ENCODE measurements at regions of chr20 and their contacts with region 1.

Region 1: DNA sequence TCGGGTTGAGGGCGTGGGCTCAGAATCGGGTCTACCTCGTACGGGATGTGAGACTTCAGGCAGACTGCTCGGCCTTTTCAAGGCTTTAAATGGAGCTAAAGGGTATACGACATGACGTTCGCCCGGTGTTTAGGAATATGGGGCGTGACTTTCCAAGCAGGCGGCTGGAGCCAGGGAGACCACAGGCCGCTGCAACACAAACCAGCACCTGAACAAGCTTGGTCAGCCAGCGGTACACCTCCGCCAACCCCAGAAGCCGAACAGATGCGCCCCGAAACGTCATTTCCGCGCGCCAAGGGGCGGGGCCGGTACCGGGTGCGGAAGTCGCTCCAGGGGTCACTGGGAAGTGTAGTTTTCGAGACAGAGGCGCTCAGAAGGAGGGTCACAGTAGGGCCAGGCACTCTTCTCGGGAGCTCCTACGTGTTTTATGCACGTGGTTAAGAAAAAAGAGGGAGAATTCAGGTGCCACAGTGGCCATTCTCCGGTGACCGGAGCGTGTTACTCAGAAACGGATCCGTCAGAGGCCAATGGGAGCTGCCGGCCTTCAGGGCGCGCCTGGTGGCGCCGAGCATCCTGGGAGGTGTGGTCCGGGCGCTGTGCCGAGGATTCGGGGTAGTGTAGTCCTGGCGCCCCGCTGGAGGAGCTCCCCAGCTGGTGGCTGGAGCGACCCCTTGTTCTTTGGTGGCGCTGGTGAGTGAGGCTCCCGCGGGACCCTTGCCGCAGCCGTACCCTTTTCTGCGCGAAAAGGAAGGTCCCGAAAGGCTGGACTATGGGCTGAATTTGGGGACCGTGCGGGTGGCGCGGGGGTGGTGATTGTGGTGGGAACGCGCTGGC is at the start of gene ZNF133:
- DNase-seq: peak; percentile 97
- H3K4me3 ChIP-seq: peak within 1 kb of the TSS; percentile 80 to 81
- H3K27ac ChIP-seq: peak within 1 kb of the TSS; percentile 96
- H3K4me1 ChIP-seq: peaks cover 3% of the 10 kb centered on the region
- H3K27me3 ChIP-seq: no peaks in the 10 kb centered on the region
- CTCF ChIP-seq: peak in 2 of 4 experiments; percentile 17 to 26
- POLR2A ChIP-seq: peak; percentile 67
- total RNA-seq, gene ZNF133: 15.2 to 23.1 TPM

Region 2: DNA sequence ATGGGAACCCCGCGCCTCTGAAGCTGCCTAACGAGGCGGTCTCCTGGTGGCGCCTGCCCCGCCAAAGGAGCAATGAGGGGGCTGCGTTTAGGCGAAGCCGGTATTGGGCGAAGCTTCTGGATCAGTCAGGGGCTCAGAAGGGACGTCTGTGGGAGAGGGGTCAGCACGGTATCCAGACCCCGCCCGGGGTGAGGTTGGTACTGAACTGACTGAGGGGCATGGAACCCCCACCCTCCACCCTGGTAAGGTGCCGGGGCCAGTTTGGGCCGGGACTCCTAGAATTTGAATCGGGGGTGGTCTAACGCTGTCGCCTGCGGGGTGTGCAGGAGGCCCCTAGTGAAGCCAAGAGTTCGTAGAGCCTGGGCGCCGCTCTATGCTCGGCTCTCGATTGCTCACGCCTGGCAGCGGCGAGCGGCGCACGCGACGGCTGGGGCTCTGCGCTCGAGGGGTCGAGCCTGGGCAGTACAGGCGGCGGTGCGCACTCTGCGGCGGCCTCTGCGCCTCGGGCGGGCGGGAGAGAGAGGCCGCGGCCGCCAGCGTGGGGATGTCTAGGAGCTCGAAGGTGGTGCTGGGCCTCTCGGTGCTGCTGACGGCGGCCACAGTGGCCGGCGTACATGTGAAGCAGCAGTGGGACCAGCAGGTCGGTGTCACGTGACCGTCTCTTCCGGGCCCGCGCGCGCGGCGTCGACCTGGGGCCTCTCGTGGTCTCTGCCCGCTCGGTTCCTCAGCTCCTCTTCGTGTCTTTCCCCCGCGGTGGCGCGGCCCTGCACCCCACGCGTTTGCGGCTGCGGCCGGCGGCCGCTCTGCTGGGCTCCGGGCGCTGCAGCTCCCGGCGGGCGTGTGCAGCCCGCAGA is 150.5 kb before region 1 on chr20 and contains the starts of genes KAT14 and PET117:
- intact Hi-C with region 1: loop called (anchors 2 kb)
- DNase-seq: peak; percentile 82
- H3K4me3 ChIP-seq: peak within 1 kb of the TSS; percentile 69 to 90
- H3K27ac ChIP-seq: peak within 1 kb of the TSS; percentile 79 to 87
- H3K4me1 ChIP-seq: no peaks in the 10 kb centered on the region
- H3K27me3 ChIP-seq: no peaks in the 10 kb centered on the region
- CTCF ChIP-seq: peak in 2 of 4 experiments; percentile 12 to 32
- POLR2A ChIP-seq: peak; percentile 37
- total RNA-seq, gene KAT14: 15.2 to 23.3 TPM
- total RNA-seq, gene PET117: 17.6 to 19.2 TPM

Region 3: DNA sequence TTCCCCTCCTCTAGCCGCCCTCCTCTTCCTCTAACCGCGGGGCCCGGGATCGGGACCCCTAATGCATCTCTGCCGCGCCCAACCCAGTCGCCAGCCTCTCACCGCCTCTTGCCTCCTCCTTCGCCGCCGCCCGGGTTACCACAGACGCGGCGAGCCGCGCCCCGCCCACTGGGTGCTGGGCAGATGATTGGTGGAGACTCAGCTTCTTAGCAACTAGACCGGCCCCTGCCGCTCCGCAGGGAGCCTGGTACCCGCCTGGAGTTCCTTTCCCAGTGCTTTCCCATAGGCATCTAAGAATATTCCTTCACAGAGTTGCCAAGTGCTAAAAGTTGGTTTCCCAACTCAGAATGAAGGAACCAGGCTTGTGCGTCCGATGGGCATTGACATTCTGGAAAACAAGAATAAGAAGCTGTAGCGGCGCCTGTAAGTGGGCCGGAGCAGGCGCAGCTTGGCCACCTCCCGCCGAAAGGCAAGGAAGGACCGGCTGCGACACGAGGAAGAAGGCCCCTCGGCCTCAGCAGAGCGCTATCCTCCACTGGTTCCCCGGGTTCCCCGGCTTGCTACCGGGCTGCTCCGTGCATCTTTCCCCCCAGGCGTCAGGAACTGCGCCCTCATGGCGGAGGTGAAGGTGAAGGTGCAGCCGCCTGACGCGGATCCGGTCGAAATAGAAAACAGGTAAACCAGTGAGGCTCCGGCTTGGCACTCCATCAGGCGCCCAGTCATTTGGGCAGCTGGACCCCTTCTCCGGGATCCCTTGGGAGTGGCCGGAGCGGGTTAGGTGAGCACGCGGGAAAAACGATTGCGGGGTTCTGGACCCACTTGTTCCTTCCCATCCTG is 179.0 kb after region 1 on chr20 and contains the starts of genes DZANK1 and POLR3F:
- intact Hi-C with region 1: loop called (anchors 2 kb)
- DNase-seq: peak; percentile 92
- H3K4me3 ChIP-seq: peak within 1 kb of the TSS; percentile 59 to 80
- H3K27ac ChIP-seq: peak within 1 kb of the TSS; percentile 72 to 84
- H3K4me1 ChIP-seq: no peaks in the 10 kb centered on the region
- H3K27me3 ChIP-seq: no peaks in the 10 kb centered on the region
- CTCF ChIP-seq: no peak
- POLR2A ChIP-seq: peak; percentile 15
- total RNA-seq, gene DZANK1: 2.0 to 7.1 TPM
- total RNA-seq, gene POLR3F: 5.3 to 24.9 TPM

Measured in prostate gland (tissue), 2 donors.